Activated T-helper 1 cell treated with anti-CD3 and anti-CD28 coated beads, Interleukin-12 subunit alpha, Interleukin-12 subunit beta, Interleukin-2, Interleukin-4 antibody, amounts not matched to agents 30 ng/mL and 10 ng/mL and 1 ng/mL, durations not matched to agents 14 hours and 24 hours and 36 hours (primary cell): ENCODE measurements at regions of chr3 and their contacts with region 1.

Region 1: DNA sequence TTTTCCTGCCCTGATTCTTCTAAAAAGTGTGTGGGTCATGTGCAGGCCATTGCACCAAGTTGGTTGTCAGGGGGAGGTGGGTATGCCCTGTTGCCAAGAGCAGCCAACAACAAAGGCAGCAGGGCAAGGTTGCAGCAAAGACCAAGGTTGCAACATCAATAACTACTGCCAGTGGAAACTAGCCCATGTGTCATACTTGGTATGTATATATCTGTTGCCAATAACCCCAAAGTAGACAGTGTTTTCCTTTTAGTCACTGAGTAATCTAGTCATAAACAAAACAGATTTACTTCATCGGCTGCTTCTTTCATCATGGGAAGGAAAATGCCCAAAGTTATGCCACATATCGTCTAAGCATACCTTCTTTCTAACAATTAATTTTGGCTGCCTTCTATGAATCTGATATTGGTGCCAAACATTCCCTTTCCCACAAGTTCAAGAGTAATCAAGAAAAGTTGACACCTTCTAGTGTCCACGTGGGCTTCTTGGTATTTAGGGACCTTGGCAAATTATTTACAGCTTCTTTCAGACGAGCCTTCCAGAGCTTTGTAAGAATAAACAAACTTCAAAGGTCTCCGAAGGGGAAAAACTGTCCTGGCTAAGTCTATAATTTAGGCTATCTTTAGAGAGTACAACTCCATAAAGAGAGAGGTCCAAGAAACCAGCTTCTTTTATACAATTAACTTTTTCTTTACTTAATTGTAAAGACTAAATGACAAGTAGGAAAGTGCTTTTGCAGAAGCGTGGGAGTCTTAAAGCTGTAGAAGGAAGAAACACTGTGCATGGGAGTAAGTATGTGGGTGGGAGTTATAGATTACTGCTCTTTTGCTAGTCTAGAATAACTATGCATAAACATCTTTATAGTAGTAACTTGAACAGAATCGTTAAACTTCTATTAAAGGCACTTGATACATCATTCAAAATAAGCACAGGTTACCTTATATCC is 10.0 kb upstream of the MBNL1 start:
- DNase-seq: peak; percentile 62
- H3K4me3 Mint-ChIP-seq: peak overlapping the region; percentile 81
- H3K27ac Mint-ChIP-seq: peak overlapping the region; percentile 98
- H3K4me1 Mint-ChIP-seq: peaks cover 90% of the 10 kb centered on the region
- H3K27me3 Mint-ChIP-seq: no peaks in the 10 kb centered on the region

Region 2: DNA sequence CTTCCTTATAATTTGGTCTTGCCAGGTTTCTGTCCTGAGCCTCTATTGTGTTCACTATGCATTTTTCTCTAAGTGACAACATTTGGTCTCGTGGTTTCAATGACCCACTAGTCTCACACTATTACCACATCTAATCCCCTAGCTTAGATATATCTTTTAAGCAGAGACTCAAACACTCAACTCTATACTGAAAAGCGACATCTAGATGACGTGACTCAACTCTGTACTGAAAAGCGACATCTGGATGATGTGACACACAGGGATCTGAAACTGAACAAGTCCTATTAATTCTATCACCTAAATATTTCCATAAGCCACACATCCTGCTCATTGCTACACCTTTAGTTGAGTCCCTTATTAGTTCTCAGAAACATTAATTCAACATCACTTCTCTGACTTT is 131.7 kb before region 1 on chr3:
- intact Hi-C with region 1: loop called (anchors 1 kb)
- DNase-seq: no peak
- H3K4me3 Mint-ChIP-seq: no peak overlapping the region
- H3K27ac Mint-ChIP-seq: peak overlapping the region; percentile 49
- H3K4me1 Mint-ChIP-seq: peaks cover 28% of the 10 kb centered on the region
- H3K27me3 Mint-ChIP-seq: peaks cover 19% of the 10 kb centered on the region

Region 3: DNA sequence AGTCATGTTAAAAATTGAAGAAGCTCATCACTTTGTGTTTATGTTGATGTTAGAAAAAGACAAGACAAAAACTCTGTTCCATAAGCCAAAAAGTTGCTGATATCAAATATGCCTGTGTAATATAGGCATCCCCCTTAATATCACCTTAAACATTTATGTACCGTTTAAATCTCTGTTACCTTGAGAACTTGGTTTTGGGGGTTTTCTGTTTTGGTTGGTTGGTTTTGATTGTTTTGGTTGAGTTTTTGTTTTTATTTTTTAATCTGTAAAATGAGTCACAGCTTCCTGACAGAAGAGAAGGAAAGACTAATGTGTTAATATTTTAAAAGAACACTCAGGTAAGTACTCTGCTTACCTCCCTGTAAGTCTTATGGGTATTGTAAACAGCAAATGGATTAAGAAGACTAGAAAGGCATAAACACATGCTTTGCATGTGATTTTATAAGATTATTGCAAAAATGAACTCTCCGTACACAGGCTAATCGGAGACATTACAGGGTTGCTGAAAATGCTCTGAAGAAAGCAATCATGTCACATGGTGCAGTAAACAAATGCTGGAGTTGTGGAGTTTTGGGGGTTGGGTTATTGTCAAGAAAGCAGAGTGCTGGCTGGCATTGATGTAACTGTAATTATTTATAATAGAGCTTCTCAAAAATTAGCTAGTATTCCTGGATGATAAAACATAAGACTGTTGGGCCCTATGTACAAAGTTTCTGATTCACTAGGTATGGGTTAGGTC is 59.5 kb before region 1 on chr3:
- intact Hi-C with region 1: loop called (anchors 1 kb)
- DNase-seq: no peak
- H3K4me3 Mint-ChIP-seq: peak overlapping the region; percentile 76
- H3K27ac Mint-ChIP-seq: peak overlapping the region; percentile 90
- H3K4me1 Mint-ChIP-seq: peaks cover 84% of the 10 kb centered on the region
- H3K27me3 Mint-ChIP-seq: no peaks in the 10 kb centered on the region